ENCODE measurements at regions of chr2 and their contacts with region 1.

Region 1: DNA sequence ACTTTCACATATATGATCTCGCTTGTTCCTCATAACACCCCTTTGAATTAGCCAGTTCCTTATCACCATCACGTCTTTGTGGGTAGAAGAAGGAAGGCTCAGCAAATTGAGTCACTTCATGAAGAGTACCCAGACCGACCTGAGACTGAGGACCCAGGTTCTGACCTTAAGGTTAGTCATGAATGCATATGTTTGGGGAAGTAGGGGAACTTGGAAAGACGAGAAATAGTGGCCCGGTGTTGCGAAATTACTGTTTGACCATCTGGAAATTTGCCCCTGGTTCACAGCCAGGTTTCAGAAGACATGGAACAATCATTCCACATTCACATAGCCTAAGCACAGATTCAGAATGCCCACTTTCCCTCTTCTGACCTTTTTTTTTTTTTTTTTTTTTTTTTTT is 59.8 kb downstream of the MEIS1 start:
- DNase-seq: peak; percentile 60
- ATAC-seq: peak; percentile 55

Region 2: GRCh38 chr2:66445925-66446860 is 48.5 kb before region 1 on chr2:
- intact Hi-C with region 1: loop called (anchors 5 kb)
- DNase-seq: peak; percentile 71
- ATAC-seq: peak; percentile 70

Region 3: GRCh38 chr2:66574701-66575624 is 80.3 kb after region 1 on chr2:
- intact Hi-C with region 1: no loop called
- DNase-seq: peak; percentile 60
- ATAC-seq: peak; percentile 82

Measured in Right ventricle myocardium superior (tissue), 1 donor.